HCT116 (cell line): ENCODE measurements at regions of chr12 and their contacts with region 1.

Region 1: GRCh38 chr12:53213348-53213747 is 6.3 kb upstream of the ITGB7 start:
- DNase-seq: no peak
- ATAC-seq: peak; percentile 83
- H3K4me3 ChIP-seq: no peak overlapping the region
- H3K27ac ChIP-seq: no peak overlapping the region; the same call in 1 of the 2 replicates
- H3K4me1 ChIP-seq: peaks cover 20 to 24% of the 10 kb centered on the region in 2 experiments
- H3K27me3 ChIP-seq: no peaks in the 10 kb centered on the region
- CTCF ChIP-seq: peak in 2 of 3 experiments; percentile 89 to 97; a peak in 4 of 6 replicates
- POLR2A ChIP-seq: no peak
- RAD21 ChIP-seq: no peak

Region 2: DNA sequence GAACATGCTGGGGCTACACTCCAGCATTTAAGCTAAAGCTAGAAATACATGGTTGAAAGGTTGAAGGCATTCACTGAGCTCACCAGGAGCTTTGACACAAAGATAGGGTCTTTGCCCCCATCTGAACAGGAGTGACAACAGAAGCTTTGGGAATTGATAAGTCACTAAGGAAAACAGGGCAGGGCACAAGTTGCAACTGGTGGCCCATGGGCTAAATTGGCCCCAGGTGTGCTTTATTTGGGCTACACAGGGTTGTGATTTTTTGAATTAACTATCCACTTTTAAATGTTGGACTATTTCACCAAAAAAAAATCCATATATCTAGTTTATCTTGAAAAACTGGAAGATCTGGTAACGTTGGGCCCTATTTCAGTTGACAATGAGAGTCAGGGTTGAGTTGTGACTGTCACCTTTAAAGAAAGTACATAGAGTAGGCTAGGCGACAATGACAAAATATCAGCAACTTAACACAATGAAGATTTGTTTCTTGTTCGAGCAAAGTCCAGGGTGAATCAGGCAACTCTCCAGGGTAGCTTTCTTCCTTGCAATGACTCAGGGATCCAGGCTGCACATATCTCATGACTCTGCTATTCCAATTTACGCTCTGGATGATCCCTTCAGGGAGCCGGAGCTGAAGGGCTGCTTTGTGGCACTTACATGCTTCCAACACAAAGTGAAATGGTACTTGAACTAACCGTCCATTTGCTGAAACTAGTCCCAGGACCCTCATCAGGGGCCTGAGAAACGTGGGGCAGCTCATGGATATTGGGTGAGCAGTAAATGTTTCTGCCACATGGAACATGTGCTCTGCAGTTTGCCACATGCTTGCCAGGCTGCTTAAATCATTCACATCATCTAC is 220.4 kb before region 1 on chr12:
- CTCF ChIA-PET with region 1: no interaction called
- POLR2A ChIA-PET with region 1: no interaction called
- RAD21 ChIA-PET with region 1: no interaction called
- intact Hi-C with region 1: no loop called
- DNase-seq: peak; percentile 80
- ATAC-seq: peak; percentile 84
- H3K4me3 ChIP-seq: peak overlapping the region in 1 of 2 experiments; percentile 2; a peak in 1 of 4 replicates
- H3K27ac ChIP-seq: peak overlapping the region; percentile 78
- H3K4me1 ChIP-seq: peaks cover 23 to 35% of the 10 kb centered on the region in 2 experiments
- H3K27me3 ChIP-seq: no peaks in the 10 kb centered on the region
- CTCF ChIP-seq: no peak
- POLR2A ChIP-seq: no peak
- RAD21 ChIP-seq: no peak

Region 3: GRCh38 chr12:53287741-53288216 is 74.4 kb after region 1 on chr12:
- CTCF ChIA-PET with region 1: interaction called, 34 read pairs
- POLR2A ChIA-PET with region 1: no interaction called
- RAD21 ChIA-PET with region 1: interaction called, 3 to 11 read pairs
- intact Hi-C with region 1: loop called (anchors 1 kb)
- DNase-seq: no peak
- ATAC-seq: peak; percentile 89
- H3K4me3 ChIP-seq: no peak overlapping the region
- H3K27ac ChIP-seq: no peak overlapping the region
- H3K4me1 ChIP-seq: no peaks in the 10 kb centered on the region
- H3K27me3 ChIP-seq: no peaks in the 10 kb centered on the region
- CTCF ChIP-seq: peak; percentile 73 to 80 (median 80)
- POLR2A ChIP-seq: no peak
- RAD21 ChIP-seq: peak; percentile 80

Region 4: DNA sequence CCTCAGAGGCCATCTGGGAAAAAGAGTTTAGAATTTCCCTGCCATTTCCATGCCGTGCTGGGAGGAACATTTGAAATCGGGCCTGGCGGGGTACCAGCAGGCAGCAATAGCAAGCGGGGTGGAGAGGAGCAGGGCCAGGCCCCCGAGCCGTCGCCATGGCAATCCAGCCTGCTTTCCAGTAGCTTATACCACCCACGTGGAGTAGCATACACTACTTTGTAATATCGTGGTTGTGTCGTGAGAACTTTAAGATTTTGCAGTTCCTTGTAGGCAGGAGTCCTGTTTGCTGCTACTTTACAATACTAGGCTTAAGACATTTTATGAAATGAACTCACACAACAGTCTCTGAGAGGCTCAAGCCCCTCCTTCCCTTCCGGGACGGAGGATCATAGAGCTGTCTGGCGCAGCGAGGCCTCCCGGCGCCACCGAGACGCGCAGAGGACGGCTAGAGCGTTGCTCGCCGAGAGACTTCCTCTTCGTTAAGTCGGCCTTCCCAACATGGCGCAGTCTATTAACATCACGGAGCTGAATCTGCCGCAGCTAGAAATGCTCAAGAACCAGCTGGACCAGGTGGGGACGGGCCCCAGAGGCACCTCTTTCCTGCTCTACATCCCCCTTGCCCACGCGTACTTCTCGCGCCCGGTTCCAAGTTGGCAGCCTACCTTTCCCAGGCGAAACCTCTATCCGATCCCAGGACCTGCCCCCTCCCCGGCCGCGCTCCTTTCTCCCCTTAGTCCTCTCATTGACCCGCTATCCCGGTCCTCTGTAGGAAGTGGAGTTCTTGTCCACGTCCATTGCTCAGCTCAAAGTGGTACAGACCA is 81.9 kb after region 1 on chr12 and contains the start of gene PFDN5:
- CTCF ChIA-PET with region 1: interaction called, 11 read pairs
- POLR2A ChIA-PET with region 1: interaction called, 3 read pairs
- RAD21 ChIA-PET with region 1: interaction called, 3 to 4 read pairs
- intact Hi-C with region 1: no loop called
- DNase-seq: peak; percentile 82
- ATAC-seq: peak; percentile 84
- H3K4me3 ChIP-seq: peak within 1 kb of the TSS; percentile 88 to 100
- H3K27ac ChIP-seq: peak within 1 kb of the TSS; percentile 74
- H3K4me1 ChIP-seq: peaks cover 21 to 41% of the 10 kb centered on the region in 2 experiments
- H3K27me3 ChIP-seq: no peaks in the 10 kb centered on the region
- CTCF ChIP-seq: no peak
- POLR2A ChIP-seq: peak; percentile 88
- RAD21 ChIP-seq: no peak
- total RNA-seq, gene PFDN5: 318 TPM